ENCODE measurements at regions of chr11 and their contacts with region 1.

Region 1: GRCh38 chr11:1694064-1694845 is 2.7 kb upstream of the KRTAP5-6 start:
- DNase-seq: peak; percentile 80 to 88
- ATAC-seq: peak; percentile 82 to 95
- H3K4me3 ChIP-seq: peak overlapping the region; percentile 62
- H3K27ac ChIP-seq: peak overlapping the region; percentile 87 to 92
- H3K4me1 ChIP-seq: no peaks in the 10 kb centered on the region
- CTCF ChIP-seq: peak; percentile 88
- EP300 ChIP-seq: no peak
- POLR2A ChIP-seq: no peak
- RAD21 ChIP-seq: peak; percentile 94 to 99

Region 2: GRCh38 chr11:1317432-1317831 is 376.8 kb before region 1 on chr11:
- CTCF ChIA-PET with region 1: no interaction called
- POLR2A ChIA-PET with region 1: no interaction called
- DNase-seq: no peak
- ATAC-seq: no peak
- H3K4me3 ChIP-seq: no peak overlapping the region
- H3K27ac ChIP-seq: no peak overlapping the region
- H3K4me1 ChIP-seq: no peaks in the 10 kb centered on the region
- CTCF ChIP-seq: no peak
- EP300 ChIP-seq: no peak
- POLR2A ChIP-seq: no peak
- RAD21 ChIP-seq: no peak

Region 3: DNA sequence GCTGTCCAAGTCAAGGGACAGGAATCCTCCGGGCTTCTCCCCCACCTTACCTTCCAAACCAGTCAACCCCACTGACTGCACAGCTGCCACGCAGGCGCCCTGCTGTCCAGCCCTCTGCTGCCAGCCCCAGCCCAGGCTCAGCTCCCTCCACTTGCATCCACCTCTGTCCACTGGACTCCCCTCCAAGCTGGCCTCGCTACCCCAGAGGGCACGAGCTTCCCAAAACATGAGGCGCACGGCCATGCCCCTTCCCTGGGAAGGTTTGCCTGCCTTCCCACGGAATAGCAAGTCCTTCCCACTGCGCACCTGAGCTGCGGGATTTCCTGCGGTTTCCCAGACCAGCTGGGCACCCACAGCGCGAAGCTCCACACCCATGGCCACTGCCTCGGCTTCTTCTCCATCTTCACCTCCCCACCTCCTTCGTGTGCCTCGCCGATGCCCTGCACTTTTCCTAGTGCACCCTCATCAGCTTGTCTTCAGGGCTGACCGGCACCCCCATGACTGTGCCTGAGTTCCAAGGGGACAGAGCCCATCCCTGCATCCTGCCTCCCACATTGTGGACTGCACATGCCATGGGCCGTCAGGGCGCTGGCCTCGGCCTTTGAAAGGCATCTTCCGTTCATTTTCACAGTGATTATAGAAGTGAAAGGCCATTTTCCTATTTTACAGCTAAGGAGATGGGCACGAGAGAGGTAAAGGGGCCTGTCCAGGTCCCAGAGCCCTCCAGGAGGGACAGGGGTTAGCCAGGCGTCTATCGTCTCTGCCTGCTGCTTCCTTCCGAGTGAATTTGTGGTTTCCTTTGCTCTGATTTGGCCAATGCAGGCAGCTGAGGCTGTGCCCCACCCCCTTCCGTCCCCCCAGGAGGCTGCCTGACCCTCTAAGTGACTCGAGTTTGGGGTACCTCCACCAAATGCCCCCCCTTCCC is 39.7 kb after region 1 on chr11:
- CTCF ChIA-PET with region 1: interaction called, 18 read pairs
- POLR2A ChIA-PET with region 1: no interaction called
- DNase-seq: no peak
- ATAC-seq: peak; percentile 14 to 18; a peak in 3 of 6 replicates
- H3K4me3 ChIP-seq: no peak overlapping the region
- H3K27ac ChIP-seq: no peak overlapping the region
- H3K4me1 ChIP-seq: no peaks in the 10 kb centered on the region
- CTCF ChIP-seq: no peak
- EP300 ChIP-seq: no peak
- POLR2A ChIP-seq: no peak
- RAD21 ChIP-seq: no peak

Region 4: GRCh38 chr11:1782831-1783724 is 88.8 kb after region 1 on chr11:
- CTCF ChIA-PET with region 1: interaction called, 13 read pairs
- POLR2A ChIA-PET with region 1: no interaction called
- DNase-seq: peak in 1 of 2 experiments; percentile 31
- ATAC-seq: peak in 1 of 2 experiments; percentile 17; a peak in 2 of 6 replicates
- H3K4me3 ChIP-seq: no peak overlapping the region
- H3K27ac ChIP-seq: peak overlapping the region; percentile 45 to 75; a peak in 5 of 6 replicates
- H3K4me1 ChIP-seq: peaks cover 28% of the 10 kb centered on the region
- CTCF ChIP-seq: no peak
- EP300 ChIP-seq: no peak
- POLR2A ChIP-seq: no peak
- RAD21 ChIP-seq: no peak

Region 5: DNA sequence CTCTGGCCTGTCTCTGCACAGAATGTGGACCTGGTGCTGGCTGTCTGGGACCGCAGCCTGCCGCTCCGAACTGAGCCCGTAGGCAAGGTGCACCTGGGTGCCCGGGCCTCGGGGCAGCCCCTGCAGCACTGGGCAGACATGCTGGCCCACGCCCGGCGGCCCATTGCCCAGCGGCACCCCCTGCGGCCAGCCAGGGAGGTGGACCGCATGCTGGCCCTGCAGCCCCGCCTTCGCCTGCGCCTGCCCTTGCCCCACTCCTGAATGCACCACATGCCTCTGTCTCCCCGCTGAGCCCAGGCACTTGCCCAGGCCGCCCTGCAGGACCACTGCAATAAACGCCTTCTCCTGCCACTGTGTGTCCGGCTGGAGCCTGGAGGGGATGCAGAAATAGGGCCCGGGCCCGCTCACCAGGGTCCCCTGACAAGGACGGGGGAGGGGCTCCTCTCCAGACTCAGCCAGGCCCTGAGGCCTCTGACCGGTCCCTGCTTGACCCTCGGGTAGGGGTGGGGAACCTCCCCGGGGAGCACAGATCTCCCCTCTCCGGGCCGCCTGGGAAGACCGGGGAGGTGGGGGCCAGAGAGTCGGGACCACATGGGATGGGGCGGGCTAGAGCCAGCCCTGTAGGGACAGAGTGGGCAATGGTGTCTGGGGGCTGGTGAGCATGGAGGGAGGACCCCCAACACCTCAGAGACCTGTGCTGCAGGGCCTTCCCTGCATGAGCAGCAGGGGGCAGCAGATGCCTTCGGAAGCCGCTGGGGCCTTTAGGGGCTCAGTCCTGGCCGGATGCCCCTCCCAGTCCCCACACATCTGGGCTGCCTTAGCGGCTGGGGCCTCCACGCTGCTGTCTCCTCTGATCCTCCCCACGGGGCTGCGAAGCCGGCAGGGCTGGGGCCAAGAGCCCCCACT is 143.2 kb after region 1 on chr11:
- CTCF ChIA-PET with region 1: interaction called, 605 read pairs
- POLR2A ChIA-PET with region 1: interaction called, 39 read pairs
- DNase-seq: peak; percentile 59 to 70
- ATAC-seq: peak; percentile 46 to 87
- H3K4me3 ChIP-seq: no peak overlapping the region
- H3K27ac ChIP-seq: peak overlapping the region in 1 of 2 experiments; percentile 73; a peak in 3 of 6 replicates
- H3K4me1 ChIP-seq: peaks cover 24% of the 10 kb centered on the region
- CTCF ChIP-seq: peak; percentile 89
- EP300 ChIP-seq: no peak
- POLR2A ChIP-seq: no peak
- RAD21 ChIP-seq: peak; percentile 93 to 97

Region 6: DNA sequence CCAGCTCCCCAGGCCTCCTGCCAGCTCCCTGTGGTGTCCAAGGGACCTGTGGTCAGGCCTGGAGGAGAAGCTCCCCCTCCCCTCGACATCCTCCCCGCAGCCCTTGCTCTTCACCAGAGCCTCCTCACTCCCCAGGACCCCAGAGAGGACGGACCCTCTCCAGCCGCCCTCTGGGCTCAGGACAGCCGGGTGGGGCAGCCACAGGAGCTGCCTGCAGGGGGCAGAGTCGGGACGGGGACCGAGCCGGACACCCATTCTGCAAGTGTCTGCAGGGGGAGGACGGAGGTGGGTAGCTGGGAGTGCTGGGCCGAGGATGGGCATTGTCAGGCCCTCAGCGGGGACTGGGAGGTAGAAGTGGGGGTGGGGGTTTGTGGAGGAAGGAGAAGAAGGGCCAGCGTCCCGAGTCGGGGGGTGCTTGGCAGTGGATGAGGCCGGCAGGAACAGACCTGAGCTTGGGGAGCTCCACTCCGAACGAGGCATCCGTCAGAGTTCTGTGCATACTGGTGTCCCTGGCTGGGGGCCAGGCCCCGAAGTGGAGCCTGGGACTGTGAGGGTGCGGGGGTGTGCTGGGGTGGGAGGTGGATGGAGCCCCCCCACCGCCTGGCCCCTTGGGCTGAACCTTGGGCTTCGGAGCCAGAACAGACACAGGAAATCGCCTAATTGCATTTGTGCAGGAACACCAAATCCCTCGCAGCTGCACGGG is 182.3 kb after region 1 on chr11:
- CTCF ChIA-PET with region 1: interaction called, 25 read pairs
- POLR2A ChIA-PET with region 1: no interaction called
- DNase-seq: peak; percentile 48 to 80
- ATAC-seq: peak; percentile 57 to 79; a peak in 4 of 6 replicates
- H3K4me3 ChIP-seq: no peak overlapping the region
- H3K27ac ChIP-seq: peak overlapping the region in 1 of 2 experiments; percentile 65; a peak in 3 of 6 replicates
- H3K4me1 ChIP-seq: peaks cover 19% of the 10 kb centered on the region; the same call in 2 of the 3 replicates
- CTCF ChIP-seq: peak; percentile 61
- EP300 ChIP-seq: no peak
- POLR2A ChIP-seq: no peak
- RAD21 ChIP-seq: peak; percentile 40 to 44; a peak in 4 of 5 replicates

Region 7: GRCh38 chr11:1943977-1944376 is 249.7 kb after region 1 on chr11:
- CTCF ChIA-PET with region 1: interaction called, 15 read pairs
- POLR2A ChIA-PET with region 1: no interaction called
- DNase-seq: no peak
- ATAC-seq: no peak; a peak in 1 of 6 replicates
- H3K4me3 ChIP-seq: no peak overlapping the region
- H3K27ac ChIP-seq: no peak overlapping the region
- H3K4me1 ChIP-seq: no peaks in the 10 kb centered on the region
- CTCF ChIP-seq: no peak
- EP300 ChIP-seq: no peak
- POLR2A ChIP-seq: no peak
- RAD21 ChIP-seq: no peak

Measured in A549 (cell line).